Activated CD4-positive, alpha-beta memory T cell treated with anti-CD3 and anti-CD28 coated beads, Interleukin-2, amount 10 ng/mL, durations not matched to agents 7 days and 5 days (primary cell): ENCODE measurements at regions of chr16 and their contacts with region 1.

Region 1: DNA sequence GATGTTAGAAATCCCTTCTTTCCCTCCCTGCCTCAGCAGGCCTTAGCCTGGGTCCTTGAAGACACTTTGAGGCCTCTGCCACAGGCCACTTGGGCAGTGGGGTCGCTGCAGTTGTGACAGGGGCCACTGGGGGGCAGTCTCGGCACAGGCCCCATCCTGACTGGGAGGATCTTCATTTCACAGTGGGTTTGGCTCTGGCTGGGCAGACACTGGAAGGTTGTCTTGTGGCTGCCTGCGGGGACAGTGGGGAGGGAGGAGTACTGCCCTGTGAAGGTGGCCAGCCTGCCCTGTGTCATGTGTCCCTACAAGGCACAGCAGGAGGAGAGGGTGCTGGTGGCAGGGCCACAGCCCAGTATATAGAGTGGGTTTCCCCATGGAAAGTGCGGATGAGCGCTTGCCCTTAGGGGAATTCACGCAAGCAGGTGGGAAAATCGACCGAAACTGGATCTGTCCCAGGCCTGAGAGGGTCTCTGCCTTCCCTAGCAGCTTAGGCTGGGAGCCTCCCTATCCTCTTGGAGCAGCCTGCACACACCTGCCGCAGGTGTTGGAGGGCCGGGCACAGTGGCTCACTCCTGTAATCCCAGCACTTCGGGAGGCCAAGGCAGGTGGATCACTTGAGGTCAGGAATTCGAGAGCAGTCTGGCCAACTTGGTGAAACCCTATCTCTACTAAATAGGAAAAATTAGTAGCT is 28.8 kb downstream of the GINS2 start:
- DNase-seq: peak; percentile 72
- H3K4me3 Mint-ChIP-seq: no peak overlapping the region
- H3K27ac Mint-ChIP-seq: no peak overlapping the region
- H3K4me1 Mint-ChIP-seq: no peaks in the 10 kb centered on the region
- H3K27me3 Mint-ChIP-seq: no peaks in the 10 kb centered on the region

Region 2: DNA sequence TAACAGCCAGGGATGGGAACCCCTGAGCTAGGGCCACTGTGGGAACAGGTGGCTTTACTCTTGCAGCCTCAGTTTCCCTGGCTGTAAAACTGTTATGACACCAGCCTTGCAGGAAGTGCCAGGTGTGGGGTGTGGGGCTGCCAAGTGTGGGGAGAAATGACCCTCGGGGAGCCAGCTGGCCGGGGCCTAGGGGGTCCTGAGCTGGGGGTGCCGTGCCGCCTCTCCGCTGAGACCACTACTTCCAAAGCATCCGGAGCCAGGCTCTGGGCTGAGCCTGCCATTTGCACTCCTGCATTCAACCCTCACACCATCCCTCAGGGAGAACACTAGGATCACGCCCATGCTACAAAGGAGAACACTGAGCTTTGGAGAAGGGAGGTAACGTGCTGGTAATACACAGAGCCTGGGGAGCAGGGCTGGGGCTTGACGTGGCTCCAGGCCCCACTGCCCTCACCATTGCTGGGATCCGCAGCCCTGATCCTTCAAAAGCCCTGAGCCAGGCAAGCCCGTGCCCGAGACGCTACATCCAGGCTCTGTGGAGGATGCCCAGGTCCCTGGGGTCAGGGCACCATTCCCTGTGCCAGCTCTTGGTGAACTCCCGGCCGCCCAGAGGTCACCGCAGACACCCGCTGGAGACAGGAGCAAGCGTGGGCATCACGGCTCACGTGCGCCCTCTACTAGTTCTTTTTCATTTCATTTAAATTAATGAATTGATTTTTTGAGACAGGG is 57.6 kb after region 1 on chr16:
- CTCF ChIA-PET with region 1: interaction called, 34 read pairs
- POLR2A ChIA-PET with region 1: no interaction called
- DNase-seq: peak; percentile 58
- H3K4me3 Mint-ChIP-seq: no peak overlapping the region
- H3K27ac Mint-ChIP-seq: no peak overlapping the region
- H3K4me1 Mint-ChIP-seq: peaks cover 2% of the 10 kb centered on the region
- H3K27me3 Mint-ChIP-seq: peaks cover 8% of the 10 kb centered on the region